CD14-positive monocyte (primary cell): ENCODE measurements at regions of chr11 and their contacts with region 1.

Region 1: GRCh38 chr11:8033305-8034105 is 46.4 kb downstream of the EIF3F start:
- DNase-seq: peak; percentile 18 to 51 (median 25)
- H3K4me3 ChIP-seq: no peak overlapping the region
- H3K4me3 Mint-ChIP-seq: peak overlapping the region in 1 of 2 donors; percentile 32
- H3K27ac ChIP-seq: no peak overlapping the region
- H3K27ac Mint-ChIP-seq: no peak overlapping the region
- H3K4me1 ChIP-seq: no peaks in the 10 kb centered on the region
- H3K4me1 Mint-ChIP-seq: peaks cover 9% of the 10 kb centered on the region
- H3K27me3 ChIP-seq: no peaks in the 10 kb centered on the region
- H3K27me3 Mint-ChIP-seq: peaks cover 5 to 13% (median 8%) of the 10 kb centered on the region in 3 donors
- CTCF ChIP-seq: peak; percentile 80

Region 2: DNA sequence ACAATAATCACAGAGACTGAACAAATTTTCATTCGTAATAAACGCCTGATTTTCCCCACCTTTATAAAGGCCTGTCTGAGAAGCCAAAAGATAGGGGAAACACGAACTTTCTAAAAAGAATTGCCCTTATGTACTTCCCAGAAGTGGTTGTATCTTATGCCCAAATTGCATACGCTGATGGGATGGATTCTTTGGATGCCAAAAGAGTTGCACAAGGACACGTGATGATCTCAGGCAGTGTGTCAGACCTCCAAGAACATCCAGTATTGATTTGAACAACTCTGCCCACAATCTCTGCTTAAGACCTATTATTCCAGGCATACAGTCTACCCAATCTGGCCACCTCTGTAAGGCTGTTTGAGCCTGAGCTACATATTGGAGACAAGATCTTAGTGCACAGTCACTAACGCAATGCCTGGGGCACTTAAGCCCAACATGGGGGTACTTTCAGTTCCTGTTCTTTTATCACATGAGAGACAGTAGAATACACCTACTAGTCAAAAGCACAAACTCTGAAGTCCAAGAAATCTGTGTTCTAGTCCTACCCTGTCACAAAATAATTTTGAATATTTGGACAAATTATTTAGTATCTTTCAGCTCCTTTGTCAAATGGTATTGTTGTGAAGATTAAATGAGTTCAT is 141.3 kb before region 1 on chr11:
- intact Hi-C with region 1: no loop called
- DNase-seq: no peak
- H3K4me3 ChIP-seq: no peak overlapping the region
- H3K4me3 Mint-ChIP-seq: no peak overlapping the region
- H3K27ac ChIP-seq: no peak overlapping the region
- H3K27ac Mint-ChIP-seq: no peak overlapping the region
- H3K4me1 ChIP-seq: no peaks in the 10 kb centered on the region
- H3K4me1 Mint-ChIP-seq: no peaks in the 10 kb centered on the region
- H3K27me3 ChIP-seq: peaks cover 4 to 8% of the 10 kb centered on the region in 2 donors
- H3K27me3 Mint-ChIP-seq: peaks cover 5 to 18% (median 12%) of the 10 kb centered on the region in 3 donors
- CTCF ChIP-seq: no peak

Region 3: DNA sequence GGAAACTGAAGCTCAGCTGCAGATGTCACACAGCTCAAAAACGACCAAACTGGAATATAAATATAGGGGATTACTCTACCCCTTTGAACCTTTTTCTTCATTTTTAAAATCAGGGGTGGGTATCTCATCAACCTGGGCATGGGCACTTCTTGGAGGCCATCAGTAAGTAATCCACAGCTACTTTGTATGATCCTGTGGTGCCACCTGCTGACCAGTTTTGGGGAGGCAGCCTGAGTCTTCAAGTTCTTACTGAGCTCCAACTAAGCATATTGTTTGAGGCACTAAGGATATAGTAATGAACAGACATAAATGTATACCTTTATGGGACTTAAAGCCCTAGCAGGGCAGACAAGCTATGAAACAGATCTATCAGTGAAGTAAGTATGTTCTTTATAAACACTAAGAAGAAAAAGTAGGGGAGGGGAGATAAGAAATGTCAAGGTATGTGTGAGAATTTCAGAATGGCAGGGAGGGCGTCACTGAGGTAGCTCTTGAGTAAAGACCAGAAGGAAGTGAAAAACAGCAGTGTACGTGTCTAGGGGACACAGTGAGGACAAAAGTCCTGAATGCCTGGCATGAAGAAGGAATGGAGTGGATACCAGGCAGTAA is 65.9 kb after region 1 on chr11:
- intact Hi-C with region 1: loop called in 1 of 2 experiments (anchors 2 kb)
- DNase-seq: peak; percentile 13 to 38 (median 33)
- H3K4me3 ChIP-seq: no peak overlapping the region
- H3K4me3 Mint-ChIP-seq: no peak overlapping the region
- H3K27ac ChIP-seq: no peak overlapping the region
- H3K27ac Mint-ChIP-seq: no peak overlapping the region
- H3K4me1 ChIP-seq: no peaks in the 10 kb centered on the region
- H3K4me1 Mint-ChIP-seq: no peaks in the 10 kb centered on the region
- H3K27me3 ChIP-seq: no peaks in the 10 kb centered on the region
- H3K27me3 Mint-ChIP-seq: peaks cover 0 to 3% (median 0%) of the 10 kb centered on the region in 3 donors
- CTCF ChIP-seq: peak; percentile 75